MCF 10A (cell line): ENCODE measurements at regions of chr11 and their contacts with region 1.

Region 1: GRCh38 chr11:1598816-1599215 is 722 bp upstream of the KRTAP5-2 start:
- DNase-seq: no peak
- H3K4me3 Mint-ChIP-seq: no peak overlapping the region
- H3K27ac Mint-ChIP-seq: no peak overlapping the region
- H3K4me1 Mint-ChIP-seq: no peaks in the 10 kb centered on the region
- H3K27me3 Mint-ChIP-seq: peaks cover 100% of the 10 kb centered on the region
- CTCF ChIP-seq: no peak

Region 2: DNA sequence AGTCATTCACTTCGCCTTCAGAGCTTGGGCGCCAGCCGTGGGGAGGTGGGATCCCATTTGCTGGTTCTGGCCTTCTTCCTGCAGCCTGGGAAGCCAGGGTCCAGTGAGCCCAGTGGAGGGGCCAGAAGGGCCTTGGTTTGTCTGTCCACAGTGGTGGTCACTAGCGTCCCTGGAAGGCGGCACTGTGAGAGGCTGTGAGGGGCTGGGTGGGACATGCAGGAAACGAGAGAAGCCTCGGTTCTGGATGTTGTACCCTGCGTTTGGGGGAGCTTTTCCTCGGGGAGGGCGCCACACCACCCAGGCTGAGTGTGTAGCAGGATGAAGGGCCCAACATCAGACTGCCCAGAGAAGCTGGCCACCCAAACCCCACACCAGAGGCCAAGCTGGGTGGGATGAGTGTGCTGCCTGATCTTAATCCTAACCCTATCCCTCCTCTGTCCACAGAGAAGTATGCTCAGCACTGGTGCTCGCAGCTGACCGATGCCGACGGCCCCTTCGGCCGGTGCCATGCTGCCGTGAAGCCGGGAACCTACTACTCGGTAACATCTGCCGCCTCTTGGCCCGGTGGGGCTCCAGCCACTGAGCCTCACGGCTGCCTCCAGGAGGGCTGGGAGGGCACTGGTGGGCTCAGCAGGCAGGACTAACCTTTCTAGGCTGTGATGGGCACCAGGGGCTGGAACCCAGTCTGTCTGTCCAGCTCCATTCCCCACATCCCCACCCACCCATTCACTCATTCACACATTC is 426.7 kb before region 1 on chr11:
- CTCF ChIA-PET with region 1: no interaction called
- POLR2A ChIA-PET with region 1: no interaction called
- intact Hi-C with region 1: no loop called
- DNase-seq: no peak
- H3K4me3 Mint-ChIP-seq: no peak overlapping the region
- H3K27ac Mint-ChIP-seq: no peak overlapping the region
- H3K4me1 Mint-ChIP-seq: no peaks in the 10 kb centered on the region
- H3K27me3 Mint-ChIP-seq: no peaks in the 10 kb centered on the region
- CTCF ChIP-seq: no peak

Region 3: DNA sequence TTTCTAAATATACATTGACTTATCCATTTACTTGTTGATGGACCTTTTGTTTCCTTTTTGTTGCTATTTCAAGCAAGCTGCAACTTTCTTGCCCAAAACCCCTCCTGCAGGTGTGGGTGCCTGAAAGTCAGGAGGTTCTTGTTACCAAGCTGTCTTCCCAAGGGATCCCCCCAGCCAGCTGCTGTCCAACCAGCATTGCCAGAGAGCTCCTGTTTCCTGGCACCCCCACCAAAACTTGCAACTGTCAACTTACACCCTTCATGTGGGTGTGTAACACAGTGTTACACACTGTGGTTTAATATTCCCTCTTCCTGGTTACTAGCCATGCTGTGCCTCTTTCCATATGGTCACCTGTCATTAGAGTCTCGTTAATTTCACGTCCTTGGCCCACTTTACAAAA is 12.1 kb before region 1 on chr11:
- CTCF ChIA-PET with region 1: interaction called, 10 read pairs
- POLR2A ChIA-PET with region 1: no interaction called
- intact Hi-C with region 1: no loop called
- DNase-seq: no peak
- H3K4me3 Mint-ChIP-seq: no peak overlapping the region
- H3K27ac Mint-ChIP-seq: no peak overlapping the region
- H3K4me1 Mint-ChIP-seq: peaks cover 7% of the 10 kb centered on the region
- H3K27me3 Mint-ChIP-seq: peaks cover 12% of the 10 kb centered on the region
- CTCF ChIP-seq: no peak